Common myeloid progenitor, CD34-positive (primary cell): ENCODE measurements at regions of chr6 and their contacts with region 1.

Region 1: GRCh38 chr6:36979347-36979742 is 6.7 kb downstream of the MTCH1 start:
- DNase-seq: peak; percentile 42 to 77 (median 72)
- H3K4me3 ChIP-seq: no peak overlapping the region
- H3K27ac ChIP-seq: no peak overlapping the region
- H3K4me1 ChIP-seq: peaks cover 5 to 17% (median 11%) of the 10 kb centered on the region in 4 experiments
- H3K27me3 ChIP-seq: no peaks in the 10 kb centered on the region

Region 2: GRCh38 chr6:36885461-36886401 is 93.6 kb before region 1 on chr6 and contains the start of gene C6orf89:
- CTCF ChIA-PET with region 1: interaction called, 24 read pairs
- POLR2A ChIA-PET with region 1: no interaction called
- DNase-seq: peak; percentile 97 to 98 (median 98)
- H3K4me3 ChIP-seq: peak within 1 kb of the TSS; percentile 76 to 95 (median 87)
- H3K27ac ChIP-seq: peak within 1 kb of the TSS; percentile 46 to 82
- H3K4me1 ChIP-seq: peaks cover 4 to 15% (median 11%) of the 10 kb centered on the region in 4 experiments
- H3K27me3 ChIP-seq: no peaks in the 10 kb centered on the region

Region 3: DNA sequence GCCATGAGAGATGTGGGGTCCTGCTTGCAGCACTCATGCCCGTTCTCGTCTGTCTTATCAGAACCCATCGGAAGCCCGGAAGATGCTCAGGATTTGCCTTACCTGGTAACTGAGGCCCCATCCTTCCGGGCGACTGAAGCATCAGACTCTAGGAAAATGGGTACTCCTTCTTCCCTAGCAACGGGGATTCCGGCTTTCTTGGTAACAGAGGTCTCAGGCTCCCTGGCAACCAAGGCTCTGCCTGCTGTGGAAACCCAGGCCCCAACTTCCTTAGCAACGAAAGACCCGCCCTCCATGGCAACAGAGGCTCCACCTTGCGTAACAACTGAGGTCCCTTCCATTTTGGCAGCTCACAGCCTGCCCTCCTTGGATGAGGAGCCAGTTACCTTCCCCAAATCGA is 16.5 kb before region 1 on chr6:
- CTCF ChIA-PET with region 1: interaction called, 16 read pairs
- POLR2A ChIA-PET with region 1: no interaction called
- DNase-seq: peak; percentile 90 to 97 (median 94)
- H3K4me3 ChIP-seq: no peak overlapping the region
- H3K27ac ChIP-seq: no peak overlapping the region
- H3K4me1 ChIP-seq: peaks cover 3 to 25% (median 23%) of the 10 kb centered on the region in 4 experiments
- H3K27me3 ChIP-seq: peaks cover 0 to 37% (median 21%) of the 10 kb centered on the region in 5 experiments

Region 4: GRCh38 chr6:36968266-36968977 is 10.9 kb before region 1 on chr6:
- CTCF ChIA-PET with region 1: interaction called, 21 read pairs
- POLR2A ChIA-PET with region 1: no interaction called
- DNase-seq: no peak
- H3K4me3 ChIP-seq: no peak overlapping the region
- H3K27ac ChIP-seq: no peak overlapping the region
- H3K4me1 ChIP-seq: peaks cover 3 to 18% (median 17%) of the 10 kb centered on the region in 4 experiments
- H3K27me3 ChIP-seq: no peaks in the 10 kb centered on the region

Region 5: DNA sequence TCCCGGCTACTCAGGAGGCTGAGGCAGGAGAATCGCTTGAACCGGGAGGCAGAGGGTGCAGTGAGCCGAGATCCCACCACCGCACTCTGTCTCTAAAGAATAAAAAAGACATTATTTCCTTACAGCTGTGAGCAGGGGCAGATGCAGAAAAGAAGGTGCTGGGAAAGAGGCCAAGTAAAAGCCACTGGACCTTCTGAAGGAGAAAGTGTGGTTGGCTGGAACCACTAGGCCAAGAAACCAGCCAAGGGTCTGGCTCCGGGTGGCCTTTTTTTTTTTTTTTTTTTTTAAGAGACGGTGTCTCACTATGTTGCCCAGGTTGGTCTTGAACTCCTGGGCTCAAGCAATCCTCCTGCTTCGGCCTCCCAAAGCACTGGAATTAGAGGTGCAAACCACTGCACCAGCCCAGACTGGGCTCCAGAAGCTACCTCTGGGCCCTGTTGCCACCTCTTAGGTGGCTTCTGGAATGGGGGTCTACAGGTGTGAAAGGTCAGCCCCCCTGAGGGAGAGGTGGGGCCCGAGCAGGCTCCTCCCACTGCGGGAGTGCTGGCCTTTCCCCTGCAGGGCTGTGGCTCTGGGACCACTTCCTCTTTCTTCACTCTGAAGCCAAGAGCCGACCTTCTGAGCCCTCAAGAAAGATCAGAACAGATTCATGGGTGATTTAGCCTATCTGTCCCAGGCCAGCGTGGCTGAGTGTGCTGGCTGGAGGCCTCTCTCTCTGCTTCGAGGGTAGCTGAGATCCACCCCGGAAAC is 25.9 kb after region 1 on chr6 and contains the start of gene FGD2:
- CTCF ChIA-PET with region 1: interaction called, 16 read pairs
- POLR2A ChIA-PET with region 1: no interaction called
- DNase-seq: peak; percentile 52 to 85 (median 85)
- H3K4me3 ChIP-seq: peak within 1 kb of the TSS in 4 of 7 experiments; percentile 11 to 65 (median 26)
- H3K27ac ChIP-seq: peak within 1 kb of the TSS in 1 of 2 experiments; percentile 10
- H3K4me1 ChIP-seq: peaks cover 6 to 53% (median 27%) of the 10 kb centered on the region in 4 experiments
- H3K27me3 ChIP-seq: no peaks in the 10 kb centered on the region